ENCODE measurements at regions of chr6 and their contacts with region 1.

Region 1: DNA sequence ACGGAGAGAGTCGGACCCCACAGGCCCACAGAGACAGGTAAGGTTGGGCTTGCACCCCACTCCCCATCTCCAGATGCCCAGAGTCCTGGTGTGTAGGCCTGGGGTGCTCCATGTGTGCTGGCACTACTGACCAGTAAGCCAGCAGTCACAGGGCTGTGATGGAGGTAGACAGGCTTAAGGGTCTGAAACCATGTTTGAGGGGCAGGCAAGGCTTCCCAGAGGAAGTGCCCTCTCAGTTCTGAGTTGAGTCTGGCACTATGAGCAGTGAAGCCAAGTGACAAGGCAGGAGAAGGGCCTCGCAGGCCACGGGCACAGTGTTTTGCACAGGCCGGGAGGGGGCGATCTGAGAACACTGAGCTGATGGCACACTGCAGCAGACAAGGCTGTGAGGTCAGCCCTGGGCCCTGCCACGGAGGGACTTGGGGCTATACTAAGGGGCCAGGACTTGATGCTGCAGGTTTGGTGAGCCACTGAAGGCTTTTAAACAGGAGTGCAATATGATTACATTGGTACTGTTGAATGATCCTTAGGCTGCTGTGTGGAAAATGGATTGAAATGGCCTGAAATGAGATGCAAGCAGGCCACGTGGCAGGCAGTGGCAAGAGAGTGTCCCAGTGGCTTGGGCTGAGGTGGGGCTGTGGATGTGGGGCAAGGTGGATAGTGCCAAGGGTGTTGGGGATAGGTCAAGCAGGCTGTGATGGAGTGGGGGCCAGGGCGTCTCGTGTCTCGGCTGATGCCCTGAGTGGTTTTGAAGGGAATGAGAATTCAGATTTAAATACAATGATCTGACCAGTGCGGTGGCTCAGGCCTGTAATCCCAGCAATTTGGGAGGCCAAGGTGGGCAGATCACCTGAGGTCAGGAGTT is 20.3 kb downstream of the TTBK1 start:
- DNase-seq: peak; percentile 93
- CTCF ChIP-seq: peak; percentile 94

Region 2: DNA sequence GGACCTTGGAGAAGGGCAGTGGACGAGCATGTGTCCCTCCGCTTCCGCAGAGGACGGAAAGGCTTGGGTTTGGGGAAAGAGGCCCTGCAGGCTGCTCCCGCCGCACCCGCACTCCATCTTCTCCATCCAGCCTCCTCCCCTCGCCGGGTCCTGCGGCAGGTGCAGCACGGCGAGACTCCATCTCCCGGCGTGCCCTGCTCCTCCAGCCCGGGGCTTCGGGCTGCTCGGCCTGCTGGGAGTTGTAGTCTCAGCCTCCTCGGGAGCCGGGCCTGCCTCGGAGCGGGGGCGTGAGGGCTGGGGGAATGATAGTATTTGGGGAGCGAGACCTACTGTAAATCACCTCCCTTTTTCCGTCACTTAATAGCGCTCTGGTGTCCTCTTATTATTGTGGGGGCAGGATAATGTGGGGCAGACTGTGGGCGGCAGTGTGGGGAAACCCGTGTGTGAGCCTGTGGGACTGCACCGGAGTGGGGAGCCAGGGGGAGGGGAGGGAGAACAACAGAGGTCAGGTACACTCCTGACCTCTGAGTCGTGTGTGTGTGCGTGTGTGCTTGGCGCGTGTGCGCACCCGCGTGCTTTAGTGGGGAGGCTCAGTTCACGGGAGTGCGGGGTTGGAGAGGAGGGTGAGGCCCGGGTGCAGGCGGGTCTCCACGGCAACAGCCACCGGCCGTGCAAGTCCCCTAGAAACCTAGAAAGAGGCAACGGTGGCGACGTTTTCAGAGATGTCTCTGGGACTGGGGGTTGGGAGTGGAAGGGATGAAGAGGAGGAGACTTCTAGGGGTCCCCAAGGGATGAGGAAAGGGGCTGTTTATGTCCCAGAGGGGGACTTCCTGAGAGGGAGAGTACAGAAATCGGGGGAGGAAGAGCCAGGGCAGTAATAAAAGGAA is 16.2 kb before region 1 on chr6:
- CTCF ChIA-PET with region 1: interaction called, 38 read pairs
- POLR2A ChIA-PET with region 1: no interaction called
- DNase-seq: peak; percentile 97
- CTCF ChIP-seq: no peak

Region 3: DNA sequence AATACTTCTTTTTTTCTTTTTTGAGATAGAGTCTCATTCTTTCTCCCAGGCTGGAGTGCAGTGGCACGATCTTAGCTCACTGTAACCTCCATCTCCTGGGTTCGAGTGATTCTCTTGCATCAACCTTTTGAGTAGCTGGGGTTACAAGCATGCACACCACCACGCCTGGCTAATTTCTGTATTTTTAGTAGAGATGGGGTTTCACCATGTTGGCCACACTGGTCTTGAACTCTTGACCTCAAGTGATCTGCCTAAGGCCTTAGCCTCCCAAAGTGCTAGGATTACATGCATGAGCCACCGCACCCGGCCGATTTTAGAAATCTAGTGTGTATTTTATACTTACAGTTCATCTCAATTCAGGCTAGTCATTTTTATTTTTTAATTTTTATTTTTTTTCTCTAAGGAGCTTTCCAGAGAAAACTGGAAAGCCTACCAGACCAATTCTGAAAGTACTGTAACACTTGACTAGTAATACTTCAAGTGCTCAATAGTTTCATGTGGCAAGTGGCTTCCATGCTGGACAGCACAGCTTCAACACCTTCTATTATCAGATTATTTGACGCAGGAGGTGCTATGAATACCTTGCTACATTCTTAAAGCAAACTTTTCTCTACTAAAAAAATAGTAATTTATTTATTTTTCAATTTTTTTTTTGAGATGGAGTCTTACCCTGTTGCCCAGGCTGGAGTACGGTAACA is 278.4 kb after region 1 on chr6:
- CTCF ChIA-PET with region 1: no interaction called
- POLR2A ChIA-PET with region 1: no interaction called
- DNase-seq: peak; percentile 28
- CTCF ChIP-seq: no peak